Activated CD4-positive, alpha-beta T cell treated with anti-CD3 and anti-CD28 coated beads for 36 hours (primary cell): ENCODE measurements at regions of chr3 and their contacts with region 1.

Region 1: DNA sequence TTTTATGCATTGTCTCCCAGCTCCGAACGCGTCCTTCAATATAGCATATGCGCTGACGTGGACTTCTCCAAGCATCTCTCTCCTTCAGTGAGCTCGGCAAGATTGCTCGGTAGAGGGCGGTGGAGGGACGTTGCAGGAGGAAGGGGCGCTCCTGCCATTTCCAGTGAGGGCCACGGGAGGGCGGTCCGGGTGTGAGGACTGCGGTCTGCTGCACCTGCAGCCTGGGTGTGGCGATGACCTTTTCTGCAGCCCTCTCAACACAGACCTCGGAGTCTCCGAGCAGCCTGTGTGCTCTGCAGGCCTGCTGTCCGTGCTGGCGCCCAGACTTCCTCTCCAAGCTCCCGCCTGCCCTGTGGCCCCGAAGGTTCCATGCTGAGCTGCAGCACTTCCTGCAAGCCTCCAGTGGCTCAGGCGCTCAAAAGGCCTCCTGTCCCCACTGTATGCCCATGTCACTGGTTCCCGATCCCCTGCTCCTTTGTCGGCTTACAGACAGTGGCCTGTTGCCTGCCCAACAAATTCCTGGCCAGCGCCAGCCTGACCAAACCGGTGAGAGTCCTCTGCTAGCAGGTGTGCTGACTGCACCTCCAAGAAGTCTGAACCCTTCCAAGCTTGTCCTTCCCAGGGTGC is 8.9 kb upstream of the RTP3 start:
- DNase-seq: peak; percentile 97
- ATAC-seq: peak; percentile 99
- H3K4me3 Mint-ChIP-seq: no peak overlapping the region
- H3K27ac Mint-ChIP-seq: no peak overlapping the region
- H3K4me1 Mint-ChIP-seq: peaks cover 14% of the 10 kb centered on the region
- H3K27me3 Mint-ChIP-seq: no peaks in the 10 kb centered on the region

Region 2: GRCh38 chr3:46469680-46470357 is 19.0 kb before region 1 on chr3:
- CTCF ChIA-PET with region 1: interaction called, 32 read pairs
- POLR2A ChIA-PET with region 1: no interaction called
- intact Hi-C with region 1: no loop called
- DNase-seq: no peak
- ATAC-seq: no peak
- H3K4me3 Mint-ChIP-seq: no peak overlapping the region
- H3K27ac Mint-ChIP-seq: no peak overlapping the region
- H3K4me1 Mint-ChIP-seq: no peaks in the 10 kb centered on the region
- H3K27me3 Mint-ChIP-seq: peaks cover 20% of the 10 kb centered on the region

Region 3: GRCh38 chr3:46538803-46539442 is 50.1 kb after region 1 on chr3:
- CTCF ChIA-PET with region 1: interaction called, 25 read pairs
- POLR2A ChIA-PET with region 1: interaction called, 4 read pairs
- intact Hi-C with region 1: loop called in 1 of 2 experiments (anchors 5 kb)
- DNase-seq: peak; percentile 86
- ATAC-seq: peak; percentile 89
- H3K4me3 Mint-ChIP-seq: peak overlapping the region; percentile 54
- H3K27ac Mint-ChIP-seq: peak overlapping the region; percentile 83
- H3K4me1 Mint-ChIP-seq: peaks cover 60% of the 10 kb centered on the region
- H3K27me3 Mint-ChIP-seq: no peaks in the 10 kb centered on the region

Region 4: GRCh38 chr3:46558184-46559043 is 69.6 kb after region 1 on chr3:
- CTCF ChIA-PET with region 1: interaction called, 103 read pairs
- POLR2A ChIA-PET with region 1: no interaction called
- intact Hi-C with region 1: loop called (anchors 1 kb)
- DNase-seq: peak; percentile 81
- ATAC-seq: peak; percentile 94
- H3K4me3 Mint-ChIP-seq: peak overlapping the region; percentile 66
- H3K27ac Mint-ChIP-seq: no peak overlapping the region
- H3K4me1 Mint-ChIP-seq: peaks cover 9% of the 10 kb centered on the region
- H3K27me3 Mint-ChIP-seq: peaks cover 2% of the 10 kb centered on the region

Region 5: DNA sequence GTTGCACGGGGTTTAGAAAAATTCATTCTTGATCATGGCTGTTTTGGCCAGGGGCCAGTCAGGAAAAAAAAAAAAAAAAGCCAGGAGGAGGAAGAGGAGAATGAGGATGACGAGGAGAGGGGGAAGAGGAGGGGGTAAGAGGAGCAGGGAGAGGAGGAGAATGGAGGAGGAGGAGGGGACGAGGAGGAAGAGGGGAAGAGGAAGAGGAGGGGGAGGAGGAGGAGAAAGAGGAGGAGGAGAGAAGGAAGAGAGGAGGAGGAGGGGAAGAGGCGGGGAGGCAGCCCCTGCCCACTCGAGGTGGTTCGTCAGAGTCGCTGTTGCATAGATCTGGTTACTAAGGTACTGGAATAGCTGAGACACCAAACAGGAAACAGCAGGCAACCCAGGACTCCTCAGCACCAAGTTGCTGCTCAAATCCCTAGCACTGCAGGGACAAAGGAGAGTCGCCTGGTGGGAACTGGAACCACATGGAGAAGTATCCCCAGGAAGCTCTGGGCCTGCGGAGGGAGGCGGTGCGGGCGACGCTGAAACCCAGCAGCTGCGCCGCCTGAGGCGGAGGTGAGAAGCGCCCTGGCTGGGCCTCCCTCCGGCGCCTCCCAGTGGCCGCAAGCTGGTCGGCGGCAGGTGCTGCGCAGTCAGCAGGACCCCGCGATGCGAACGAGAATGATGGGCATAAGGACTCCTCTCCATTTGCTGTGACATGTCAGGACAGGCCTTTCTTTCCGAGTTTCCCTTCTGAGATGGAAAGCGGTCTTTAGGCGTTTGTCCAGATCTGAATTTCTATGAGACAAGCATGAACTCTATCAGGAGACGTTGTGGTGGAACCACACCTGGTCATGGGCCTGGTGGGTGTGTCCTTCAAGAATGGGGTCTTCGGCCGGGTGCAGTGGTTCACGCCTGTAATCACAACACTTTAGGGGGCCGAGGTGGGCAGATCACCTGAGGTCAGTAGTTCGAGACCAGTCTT is 141.0 kb after region 1 on chr3:
- CTCF ChIA-PET with region 1: interaction called, 202 read pairs
- POLR2A ChIA-PET with region 1: interaction called, 5 read pairs
- intact Hi-C with region 1: loop called (anchors 1 kb)
- DNase-seq: peak; percentile 89
- ATAC-seq: peak; percentile 99
- H3K4me3 Mint-ChIP-seq: peak overlapping the region; percentile 53
- H3K27ac Mint-ChIP-seq: peak overlapping the region; percentile 66
- H3K4me1 Mint-ChIP-seq: peaks cover 17% of the 10 kb centered on the region
- H3K27me3 Mint-ChIP-seq: no peaks in the 10 kb centered on the region